ENCODE measurements at regions of chr14 and their contacts with region 1.

Region 1: GRCh38 chr14:73633116-73634010 is 11.4 kb upstream of the DNAL1 start:
- DNase-seq: peak; percentile 71
- H3K4me3 ChIP-seq: peak overlapping the region; percentile 42 to 64 (median 58)
- H3K27ac ChIP-seq: no peak overlapping the region
- H3K4me1 ChIP-seq: peaks cover 9% of the 10 kb centered on the region
- H3K27me3 ChIP-seq: no peaks in the 10 kb centered on the region
- CTCF ChIP-seq: peak; percentile 73 to 84
- POLR2A ChIP-seq: no peak

Region 2: DNA sequence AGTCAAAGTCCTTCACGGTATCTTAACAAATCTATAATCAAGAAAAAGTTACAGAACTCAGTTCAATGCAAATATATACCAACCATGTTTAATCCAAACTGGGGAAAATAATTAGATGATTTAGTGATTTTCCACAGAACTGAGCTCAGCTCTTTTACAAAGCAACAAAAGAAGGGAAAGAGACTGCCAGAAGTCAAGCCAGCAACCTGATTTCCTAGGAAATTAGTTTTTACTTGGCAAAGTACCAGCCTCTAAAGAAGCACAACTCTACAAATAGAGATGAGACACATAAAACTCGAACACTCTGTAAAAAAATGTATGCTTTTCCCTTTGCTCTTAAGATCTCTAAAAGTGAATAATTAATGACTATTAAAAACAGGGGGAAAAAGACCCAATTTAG is 194.4 kb before region 1 on chr14:
- CTCF ChIA-PET with region 1: no interaction called
- POLR2A ChIA-PET with region 1: no interaction called
- dilution Hi-C with region 1: no loop called
- intact Hi-C with region 1: no loop called
- DNase-seq: peak; percentile 56
- H3K4me3 ChIP-seq: no peak overlapping the region
- H3K27ac ChIP-seq: no peak overlapping the region
- H3K4me1 ChIP-seq: no peaks in the 10 kb centered on the region
- H3K27me3 ChIP-seq: no peaks in the 10 kb centered on the region
- CTCF ChIP-seq: no peak
- POLR2A ChIP-seq: no peak

Region 3: DNA sequence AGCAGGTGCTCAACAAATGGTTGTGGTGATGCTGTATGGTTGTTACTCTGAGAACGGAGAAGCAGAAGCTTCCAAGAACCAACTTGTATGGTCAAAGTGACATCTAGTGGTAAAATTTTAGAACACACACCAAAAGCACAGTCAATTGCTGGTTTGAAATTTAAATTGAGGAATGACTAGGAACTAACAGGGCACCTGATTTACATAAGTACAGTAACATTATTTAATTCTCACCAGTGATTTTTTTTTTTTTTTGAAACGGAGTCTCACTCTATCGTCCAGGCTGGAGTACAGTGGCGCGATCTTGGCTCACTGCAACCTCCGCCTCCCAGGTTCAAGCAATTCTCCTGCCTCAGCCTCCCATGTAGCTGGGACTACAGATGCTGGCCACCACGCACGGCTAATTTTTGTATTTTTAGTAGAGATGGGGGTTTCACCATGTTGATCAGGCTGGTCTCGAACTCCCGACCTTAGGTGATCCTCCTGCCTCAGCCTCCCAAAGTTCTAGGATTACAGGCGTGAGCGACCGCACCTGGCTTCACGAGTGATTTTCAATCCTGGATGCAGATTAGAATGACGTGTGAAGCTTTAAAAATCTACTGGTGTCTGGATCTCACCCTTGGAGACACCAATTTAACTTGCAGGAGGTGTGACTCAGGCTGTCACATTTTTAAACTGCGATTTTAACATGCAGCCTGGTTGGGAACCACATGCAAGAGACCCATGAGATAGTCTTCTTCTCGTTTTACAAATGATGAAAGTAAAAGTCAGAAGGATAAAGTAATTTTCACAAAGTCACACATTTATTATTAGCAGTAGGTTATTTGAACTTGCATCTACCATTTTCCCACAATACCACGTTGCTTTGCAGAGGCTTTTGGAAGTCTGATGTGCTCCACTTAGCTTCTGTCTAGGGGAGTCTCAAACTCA is 160.9 kb before region 1 on chr14:
- CTCF ChIA-PET with region 1: interaction called, 10 read pairs
- POLR2A ChIA-PET with region 1: no interaction called
- dilution Hi-C with region 1: no loop called
- intact Hi-C with region 1: no loop called
- DNase-seq: peak; percentile 77
- H3K4me3 ChIP-seq: no peak overlapping the region
- H3K27ac ChIP-seq: no peak overlapping the region
- H3K4me1 ChIP-seq: no peaks in the 10 kb centered on the region
- H3K27me3 ChIP-seq: no peaks in the 10 kb centered on the region
- CTCF ChIP-seq: peak; percentile 45 to 48
- POLR2A ChIP-seq: no peak

Region 4: GRCh38 chr14:73503648-73504047 is 129.7 kb before region 1 on chr14:
- CTCF ChIA-PET with region 1: interaction called, 149 read pairs
- POLR2A ChIA-PET with region 1: no interaction called
- dilution Hi-C with region 1: no loop called
- intact Hi-C with region 1: loop called (anchors 1 kb)
- DNase-seq: no peak
- H3K4me3 ChIP-seq: no peak overlapping the region
- H3K27ac ChIP-seq: no peak overlapping the region
- H3K4me1 ChIP-seq: no peaks in the 10 kb centered on the region
- H3K27me3 ChIP-seq: no peaks in the 10 kb centered on the region
- CTCF ChIP-seq: no peak
- POLR2A ChIP-seq: no peak

Region 5: GRCh38 chr14:73662487-73662943 is 29.2 kb after region 1 on chr14:
- CTCF ChIA-PET with region 1: interaction called, 6 read pairs
- POLR2A ChIA-PET with region 1: no interaction called
- dilution Hi-C with region 1: no loop called
- intact Hi-C with region 1: loop called (anchors 1 kb)
- DNase-seq: peak; percentile 52
- H3K4me3 ChIP-seq: no peak overlapping the region
- H3K27ac ChIP-seq: peak overlapping the region; percentile 15
- H3K4me1 ChIP-seq: peaks cover 6% of the 10 kb centered on the region
- H3K27me3 ChIP-seq: no peaks in the 10 kb centered on the region
- CTCF ChIP-seq: peak; percentile 27 to 54
- POLR2A ChIP-seq: no peak

Region 6: DNA sequence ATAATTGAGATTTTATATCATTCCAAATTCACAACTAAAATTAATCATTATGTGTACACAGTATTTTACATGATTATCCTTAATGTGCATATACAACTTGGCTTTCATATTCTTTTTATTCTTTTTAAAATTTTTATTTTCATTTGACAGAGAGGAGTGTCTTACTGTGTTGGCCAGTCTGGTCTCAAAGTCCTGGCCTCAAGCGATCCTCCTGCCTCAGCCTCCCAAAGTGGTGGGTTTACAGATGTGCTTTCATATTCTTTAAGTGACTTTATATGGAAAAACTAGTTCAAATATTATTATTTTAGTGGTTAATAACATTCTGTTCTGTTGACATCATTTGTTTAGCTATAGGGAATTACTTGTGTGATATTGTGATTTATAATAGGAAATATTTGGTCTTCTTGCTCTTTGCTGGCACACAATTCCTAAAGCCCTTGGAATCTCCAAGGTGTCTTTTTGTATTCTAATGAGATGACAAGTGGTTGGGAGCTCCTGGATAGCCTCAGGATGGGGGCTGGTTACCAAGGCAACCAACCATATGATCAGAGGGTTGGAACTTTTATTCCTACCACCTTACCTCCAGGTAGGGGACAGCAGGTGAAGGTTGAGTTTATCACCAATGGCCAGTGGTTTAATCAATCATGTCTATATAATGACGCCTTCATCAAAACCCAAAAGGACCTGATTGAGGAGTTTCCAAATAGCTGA is 237.3 kb after region 1 on chr14:
- CTCF ChIA-PET with region 1: interaction called, 12 read pairs
- POLR2A ChIA-PET with region 1: no interaction called
- dilution Hi-C with region 1: no loop called
- intact Hi-C with region 1: loop called (anchors 2 kb)
- DNase-seq: no peak
- H3K4me3 ChIP-seq: no peak overlapping the region
- H3K27ac ChIP-seq: no peak overlapping the region
- H3K4me1 ChIP-seq: no peaks in the 10 kb centered on the region
- H3K27me3 ChIP-seq: no peaks in the 10 kb centered on the region
- CTCF ChIP-seq: no peak
- POLR2A ChIP-seq: no peak

Measured in endothelial cell of umbilical vein (primary cell).